ENCODE measurements at regions of chr22 and their contacts with region 1.

Region 1: DNA sequence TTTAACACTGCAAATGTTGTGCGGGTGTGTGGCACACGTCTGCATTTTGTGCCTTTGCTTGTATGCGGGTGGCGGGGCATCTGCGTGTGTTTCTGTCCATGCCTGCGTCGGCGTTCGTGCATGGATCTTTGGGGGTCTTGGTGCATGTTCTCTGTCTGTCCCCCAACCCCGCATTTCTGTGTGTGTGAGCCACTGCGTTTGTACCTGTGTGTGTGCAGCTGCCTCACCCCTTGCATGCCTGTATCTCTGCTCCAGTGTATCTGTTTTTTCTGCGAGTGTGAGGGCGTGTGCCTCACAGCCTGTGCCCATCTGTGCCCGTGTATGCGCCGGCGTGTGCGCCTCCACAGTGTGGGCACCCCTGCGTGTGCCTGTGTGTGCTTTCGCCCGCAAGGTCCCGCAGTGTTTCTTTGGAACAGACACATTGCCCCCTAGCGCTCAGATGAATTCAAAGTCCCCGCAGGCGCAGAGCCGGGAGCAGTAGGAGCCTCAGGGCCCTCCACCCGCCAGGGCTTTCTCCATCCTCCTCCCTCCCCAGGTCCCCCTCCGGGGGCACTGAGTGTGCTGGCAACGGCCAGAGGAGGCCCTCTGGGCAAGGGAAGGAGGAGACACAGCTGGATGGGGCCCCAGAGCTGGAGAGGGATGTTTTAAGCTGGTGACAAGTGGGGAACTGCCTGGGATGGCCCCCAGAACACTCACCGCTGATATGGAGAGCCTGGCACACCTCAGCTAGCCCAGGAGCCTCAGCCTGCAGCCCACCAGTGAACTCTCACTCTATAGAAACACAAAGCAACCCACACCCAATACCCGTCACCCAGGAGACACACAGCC is 3.1 kb upstream of the MN1 start:
- H3K4me3 Mint-ChIP-seq: no peak overlapping the region
- H3K27ac Mint-ChIP-seq: no peak overlapping the region
- H3K4me1 Mint-ChIP-seq: peaks cover 31% of the 10 kb centered on the region
- H3K27me3 Mint-ChIP-seq: peaks cover 50% of the 10 kb centered on the region

Region 2: DNA sequence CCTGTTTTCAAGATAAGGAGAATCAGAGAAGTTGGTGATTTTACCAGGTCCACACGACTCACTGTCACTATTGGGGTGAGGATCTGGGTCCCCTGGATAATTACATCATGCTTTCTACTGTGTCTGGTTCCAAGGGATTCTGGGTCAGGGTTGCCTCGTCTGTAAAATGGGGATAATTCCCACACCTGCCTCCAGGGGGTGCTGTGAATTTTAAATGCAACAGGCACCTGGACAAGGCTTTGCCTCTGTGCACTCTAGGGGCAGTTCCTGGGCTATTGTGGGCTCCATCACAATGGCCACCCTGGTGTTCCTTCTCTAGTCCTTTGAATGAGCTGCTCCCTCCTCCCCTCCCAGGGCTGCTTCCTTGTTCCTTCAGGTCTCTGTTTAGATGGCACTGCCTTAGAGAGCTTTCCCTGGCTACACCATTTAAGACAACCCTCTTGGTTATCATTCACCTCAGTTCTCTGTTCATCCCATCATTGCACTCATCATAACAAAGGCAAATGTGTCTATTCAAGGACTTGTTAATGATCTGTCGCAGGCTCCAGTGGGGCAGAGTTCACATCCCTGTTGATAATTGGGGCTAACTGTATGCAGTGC is 968.7 kb before region 1 on chr22:
- intact Hi-C with region 1: loop called (anchors 10 kb)
- H3K4me3 Mint-ChIP-seq: no peak overlapping the region
- H3K27ac Mint-ChIP-seq: no peak overlapping the region
- H3K4me1 Mint-ChIP-seq: no peaks in the 10 kb centered on the region
- H3K27me3 Mint-ChIP-seq: peaks cover 2% of the 10 kb centered on the region

Region 3: GRCh38 chr22:27866132-27867086 is 61.7 kb after region 1 on chr22:
- intact Hi-C with region 1: no loop called
- H3K4me3 Mint-ChIP-seq: no peak overlapping the region
- H3K27ac Mint-ChIP-seq: no peak overlapping the region
- H3K4me1 Mint-ChIP-seq: peaks cover 27% of the 10 kb centered on the region
- H3K27me3 Mint-ChIP-seq: no peaks in the 10 kb centered on the region